Sigmoid colon (tissue), 7 donors: ENCODE measurements at regions of chr7 and their contacts with region 1.

Region 1: DNA sequence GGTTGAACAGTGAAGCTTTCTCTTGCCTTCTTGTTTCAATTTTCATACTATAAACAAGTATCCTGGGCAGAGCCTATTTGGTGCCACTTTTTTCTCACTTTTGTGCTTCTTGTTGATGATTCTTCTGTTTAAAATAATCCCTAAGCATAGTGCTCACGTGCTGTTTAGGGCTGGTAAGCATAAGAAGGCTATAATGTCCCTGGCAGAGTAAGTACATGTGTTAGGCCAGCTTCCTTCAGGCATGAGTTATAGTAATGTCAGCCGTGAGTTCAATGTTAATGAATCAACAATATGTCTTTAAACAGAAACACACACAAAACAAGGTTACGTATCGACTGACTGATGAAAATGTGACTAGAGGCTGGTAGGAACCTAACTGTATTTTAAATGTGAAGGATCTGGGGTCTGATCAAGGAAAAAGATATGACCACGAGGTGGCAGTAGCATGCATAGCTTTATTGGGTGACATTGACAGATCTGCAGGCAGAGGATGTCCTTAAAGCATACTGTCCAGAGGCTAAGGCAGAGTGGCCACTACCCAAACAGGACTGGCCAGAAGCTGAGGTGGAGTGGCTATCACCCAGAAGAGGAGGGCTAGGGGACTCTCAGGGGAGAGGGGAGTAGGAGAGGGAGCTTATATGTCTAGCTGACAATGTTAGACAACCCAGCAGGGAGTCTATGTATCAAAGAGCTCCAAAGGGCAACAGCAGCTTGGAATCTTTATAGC is 113.7 kb downstream of the BRAF start:
- DNase-seq: peak; percentile 64
- H3K4me3 ChIP-seq: no peak overlapping the region
- H3K27ac ChIP-seq: no peak overlapping the region
- H3K4me1 ChIP-seq: peaks cover 0 to 14% (median 5%) of the 10 kb centered on the region in 4 donors
- H3K27me3 ChIP-seq: no peaks in the 10 kb centered on the region
- CTCF ChIP-seq: peak; percentile 49 to 72 (median 57)
- EP300 ChIP-seq: no peak
- POLR2A ChIP-seq: no peak

Region 2: DNA sequence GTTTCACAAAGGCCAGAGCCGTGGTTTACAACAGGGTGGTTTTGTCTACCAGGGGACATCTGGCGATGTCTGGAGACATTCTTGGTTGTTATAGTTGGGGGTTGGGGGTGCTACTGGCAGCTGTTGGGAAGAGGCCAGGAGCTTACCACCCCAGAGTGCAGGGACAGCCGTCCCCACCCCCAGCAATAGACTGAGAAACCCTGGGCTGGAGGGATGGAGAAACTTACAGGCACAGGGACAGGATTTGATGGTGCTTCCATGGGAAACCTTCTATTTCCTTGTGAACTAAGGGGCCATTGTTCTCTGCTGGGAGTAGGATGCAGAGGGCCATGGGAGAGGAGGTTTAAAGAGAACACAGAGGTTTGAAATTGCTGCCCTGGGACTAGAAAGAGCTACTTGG is 127.3 kb before region 1 on chr7:
- intact Hi-C with region 1: no loop called
- DNase-seq: no peak
- H3K4me3 ChIP-seq: no peak overlapping the region
- H3K27ac ChIP-seq: peak overlapping the region in 1 of 4 donors; percentile 31
- H3K4me1 ChIP-seq: no peaks in the 10 kb centered on the region
- H3K27me3 ChIP-seq: no peaks in the 10 kb centered on the region
- CTCF ChIP-seq: no peak
- EP300 ChIP-seq: no peak
- POLR2A ChIP-seq: no peak

Region 3: DNA sequence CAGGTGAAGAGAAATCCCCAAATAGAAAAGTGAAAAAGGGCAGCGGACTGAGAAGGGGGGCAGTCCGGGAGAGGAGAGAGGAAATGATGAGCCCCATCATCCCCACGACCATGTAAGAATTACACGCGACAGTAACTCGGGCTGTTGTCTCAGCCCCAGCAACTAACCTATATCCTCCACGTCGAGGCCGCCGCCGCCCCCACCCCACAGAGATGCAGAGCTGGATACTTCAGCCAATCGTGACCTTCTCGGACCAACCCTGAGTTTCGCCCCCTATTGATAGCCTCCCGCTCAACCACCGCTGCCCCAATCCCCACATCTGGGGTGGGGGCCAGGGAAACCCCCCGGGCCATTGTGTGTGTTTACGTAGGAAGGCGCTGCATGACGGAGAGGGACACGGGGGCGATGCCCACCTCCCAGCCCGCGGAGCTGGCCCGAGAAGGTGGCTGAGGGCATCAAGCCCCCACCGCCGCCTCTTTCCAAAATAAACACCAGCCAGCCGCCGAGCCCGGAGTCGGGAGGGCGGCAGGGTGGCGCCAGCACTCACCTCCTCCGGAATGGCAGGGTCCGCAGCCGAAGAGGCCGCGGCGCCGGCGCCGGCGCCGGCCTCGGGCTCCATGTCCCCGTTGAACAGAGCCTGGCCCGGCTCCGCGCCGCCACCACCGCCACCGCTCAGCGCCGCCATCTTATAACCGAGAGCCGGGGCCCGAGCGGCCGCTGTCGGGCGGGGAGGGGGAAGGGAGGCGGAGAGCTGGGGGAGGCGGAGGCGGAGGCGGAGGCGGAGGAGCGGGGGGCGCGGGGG is 113.2 kb after region 1 on chr7:
- intact Hi-C with region 1: loop called (anchors 2 kb)
- DNase-seq: peak; percentile 88
- H3K4me3 ChIP-seq: peak overlapping the region; percentile 91 to 97 (median 96)
- H3K27ac ChIP-seq: peak overlapping the region; percentile 96 to 100 (median 100)
- H3K4me1 ChIP-seq: peaks cover 3 to 42% (median 23%) of the 10 kb centered on the region in 4 donors
- H3K27me3 ChIP-seq: no peaks in the 10 kb centered on the region
- CTCF ChIP-seq: peak in 2 of 4 experiments; percentile 26 to 34
- EP300 ChIP-seq: peak in 1 of 4 donors; percentile 5
- POLR2A ChIP-seq: no peak

Region 4: GRCh38 chr7:141654551-141654950 is 843.6 kb after region 1 on chr7:
- intact Hi-C with region 1: loop called (anchors 5 kb)
- DNase-seq: no peak
- H3K4me3 ChIP-seq: no peak overlapping the region
- H3K27ac ChIP-seq: no peak overlapping the region
- H3K4me1 ChIP-seq: peaks cover 0 to 14% (median 7%) of the 10 kb centered on the region in 4 donors
- H3K27me3 ChIP-seq: no peaks in the 10 kb centered on the region
- CTCF ChIP-seq: peak in 3 of 4 experiments; percentile 43 to 55 (median 44)
- EP300 ChIP-seq: no peak
- POLR2A ChIP-seq: no peak